H1 (cell line): ENCODE measurements at regions of chr13 and their contacts with region 1.

Region 1: DNA sequence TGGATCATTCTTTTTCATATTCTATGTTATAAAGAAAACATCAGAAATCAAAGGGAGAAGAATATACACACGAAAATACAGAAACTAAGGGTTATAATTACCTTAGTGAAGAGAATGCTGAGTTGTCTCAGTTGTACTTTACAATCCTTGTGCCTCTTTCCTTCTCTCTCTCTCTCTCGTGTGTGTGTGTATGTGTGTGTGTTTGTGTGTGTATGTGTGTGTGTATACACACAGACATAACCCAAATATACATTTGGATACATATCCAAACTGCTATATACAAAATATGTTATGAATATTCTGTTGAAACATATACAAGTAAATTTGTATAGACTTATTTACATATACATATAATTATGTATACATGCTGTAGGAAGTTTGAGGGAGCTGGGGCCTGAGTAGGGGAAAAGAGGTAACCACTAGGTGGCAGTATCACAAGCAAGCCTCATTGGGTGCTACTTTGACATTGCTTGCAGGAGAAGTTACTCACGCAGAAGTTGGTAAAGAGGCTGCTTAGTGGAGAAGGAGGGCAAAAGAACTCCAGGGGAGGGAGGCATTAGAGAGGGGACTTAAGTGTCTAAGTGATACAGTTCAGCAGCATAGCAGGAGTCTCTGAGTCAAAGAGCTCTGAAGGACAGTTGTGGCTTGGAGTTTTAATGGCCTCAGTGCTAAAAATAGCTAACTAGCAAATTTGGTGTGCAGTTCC is 465.1 kb upstream of the PCDH20 start:
- DNase-seq: peak in 1 of 2 experiments; percentile 27
- H3K4me3 ChIP-seq: no peak overlapping the region
- H3K27ac ChIP-seq: no peak overlapping the region
- H3K4me1 ChIP-seq: no peaks in the 10 kb centered on the region
- H3K27me3 ChIP-seq: no peaks in the 10 kb centered on the region
- CTCF ChIP-seq: peak; percentile 9 to 72 (median 57)
- EP300 ChIP-seq: no peak
- POLR2A ChIP-seq: no peak
- RAD21 ChIP-seq: peak; percentile 51 to 66

Region 2: DNA sequence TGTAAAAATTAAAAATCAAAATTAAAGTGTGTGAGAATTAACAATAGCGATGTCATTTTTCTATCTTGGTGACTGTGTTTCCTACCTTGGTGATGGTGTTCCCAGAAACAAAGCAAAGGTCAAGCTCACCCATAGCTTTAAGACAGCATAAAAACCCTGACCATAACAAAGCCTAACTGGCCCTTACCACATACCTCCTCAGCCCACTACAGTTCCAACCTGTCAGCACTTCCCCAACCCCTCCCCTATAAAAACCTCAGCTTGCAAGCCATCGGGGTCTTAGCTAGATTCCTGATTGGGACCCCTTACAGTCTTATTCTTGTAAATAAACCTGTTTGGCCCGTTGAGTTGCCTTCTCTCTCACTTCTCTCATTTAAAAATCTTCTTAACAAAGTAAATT is 19.3 kb after region 1 on chr13:
- CTCF ChIA-PET with region 1: interaction called, 18 read pairs
- POLR2A ChIA-PET with region 1: no interaction called
- DNase-seq: no peak
- H3K4me3 ChIP-seq: peak overlapping the region in 1 of 4 experiments; percentile 33; a peak in 1 of 8 replicates
- H3K27ac ChIP-seq: no peak overlapping the region
- H3K4me1 ChIP-seq: peaks cover 0 to 4% (median 1%) of the 10 kb centered on the region in 4 experiments; a peak in 3 of 7 replicates
- H3K27me3 ChIP-seq: no peaks in the 10 kb centered on the region
- CTCF ChIP-seq: no peak
- EP300 ChIP-seq: no peak
- POLR2A ChIP-seq: no peak
- RAD21 ChIP-seq: no peak

Region 3: GRCh38 chr13:62046512-62046911 is 165.8 kb after region 1 on chr13:
- CTCF ChIA-PET with region 1: no interaction called
- POLR2A ChIA-PET with region 1: no interaction called
- DNase-seq: no peak
- H3K4me3 ChIP-seq: no peak overlapping the region
- H3K27ac ChIP-seq: no peak overlapping the region
- H3K4me1 ChIP-seq: no peaks in the 10 kb centered on the region
- H3K27me3 ChIP-seq: no peaks in the 10 kb centered on the region
- CTCF ChIP-seq: no peak
- EP300 ChIP-seq: no peak
- POLR2A ChIP-seq: no peak
- RAD21 ChIP-seq: no peak